ENCODE measurements at regions of chr3 and their contacts with region 1.

Region 1: GRCh38 chr3:101381809-101382208 is 61.4 kb upstream of the IMPG2 start:
- DNase-seq: peak; percentile 77
- H3K4me3 ChIP-seq: no peak overlapping the region
- H3K27ac ChIP-seq: no peak overlapping the region
- H3K4me1 ChIP-seq: no peaks in the 10 kb centered on the region
- H3K27me3 ChIP-seq: no peaks in the 10 kb centered on the region
- CTCF ChIP-seq: peak; percentile 65

Region 2: DNA sequence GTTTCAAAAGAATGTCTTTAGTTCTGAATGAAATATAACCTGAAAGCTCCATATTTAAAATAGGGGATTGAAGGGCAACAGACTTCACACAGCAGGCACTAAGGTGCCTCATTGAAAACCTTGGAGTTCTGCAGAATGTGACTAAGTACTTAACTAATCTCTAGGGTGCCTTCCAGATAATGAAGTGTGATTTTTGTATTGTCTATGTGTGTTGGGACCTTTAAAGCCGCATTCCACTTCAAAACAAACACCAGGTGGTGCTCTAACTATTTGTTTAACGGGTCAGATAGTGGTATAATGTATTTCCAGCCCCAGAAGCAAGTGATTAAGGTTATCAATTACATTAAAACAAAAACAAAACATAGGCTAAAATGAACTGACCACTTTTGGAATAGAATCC is 644.5 kb before region 1 on chr3:
- CTCF ChIA-PET with region 1: no interaction called
- POLR2A ChIA-PET with region 1: no interaction called
- intact Hi-C with region 1: loop called (anchors 5 kb)
- DNase-seq: peak; percentile 57
- H3K4me3 ChIP-seq: no peak overlapping the region
- H3K27ac ChIP-seq: no peak overlapping the region
- H3K4me1 ChIP-seq: no peaks in the 10 kb centered on the region
- H3K27me3 ChIP-seq: no peaks in the 10 kb centered on the region
- CTCF ChIP-seq: peak; percentile 54

Region 3: DNA sequence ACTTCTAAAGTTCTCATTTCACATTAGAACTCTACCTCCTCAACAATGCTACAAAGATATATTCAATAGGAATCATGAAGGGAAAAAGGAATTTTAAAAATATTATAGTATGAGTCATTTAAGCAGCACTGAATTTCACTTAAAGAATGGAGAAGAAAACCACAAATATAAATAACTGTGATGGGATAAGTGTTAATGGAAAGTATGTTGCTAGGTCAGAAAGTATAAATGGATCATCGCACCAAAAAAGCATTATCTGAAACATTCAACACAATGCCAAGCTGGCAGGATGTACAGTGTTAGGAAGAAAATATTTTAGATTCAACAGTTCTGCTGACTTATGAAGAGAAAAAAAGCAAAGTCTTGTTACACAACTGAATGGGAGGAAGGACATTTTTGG is 571.1 kb before region 1 on chr3:
- CTCF ChIA-PET with region 1: no interaction called
- POLR2A ChIA-PET with region 1: no interaction called
- intact Hi-C with region 1: loop called (anchors 10 kb)
- DNase-seq: no peak
- H3K4me3 ChIP-seq: no peak overlapping the region
- H3K27ac ChIP-seq: no peak overlapping the region
- H3K4me1 ChIP-seq: no peaks in the 10 kb centered on the region
- H3K27me3 ChIP-seq: no peaks in the 10 kb centered on the region
- CTCF ChIP-seq: no peak

Region 4: DNA sequence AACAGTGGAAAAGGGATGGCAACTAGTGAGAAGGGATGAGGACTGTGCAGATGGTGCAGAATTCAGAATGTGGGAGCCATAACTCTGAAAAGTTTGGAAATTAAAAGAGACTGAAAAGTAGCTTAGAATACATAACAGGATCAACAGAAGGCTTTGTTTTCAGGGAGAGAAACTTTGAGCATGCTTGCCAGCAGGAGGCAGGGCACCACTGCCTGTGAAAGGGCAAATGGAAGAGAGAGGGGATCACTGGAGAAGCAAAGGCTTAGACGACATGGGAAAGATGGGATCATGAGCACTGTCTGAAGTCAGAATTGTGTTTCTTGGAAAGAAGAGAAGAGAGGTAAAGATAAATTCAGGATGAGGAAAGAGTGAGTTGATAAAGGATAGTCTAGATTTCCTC is 488.2 kb before region 1 on chr3:
- CTCF ChIA-PET with region 1: interaction called, 3 read pairs
- POLR2A ChIA-PET with region 1: no interaction called
- intact Hi-C with region 1: loop called (anchors 5 kb)
- DNase-seq: peak; percentile 66
- H3K4me3 ChIP-seq: no peak overlapping the region
- H3K27ac ChIP-seq: no peak overlapping the region
- H3K4me1 ChIP-seq: no peaks in the 10 kb centered on the region
- H3K27me3 ChIP-seq: no peaks in the 10 kb centered on the region
- CTCF ChIP-seq: peak; percentile 75

Region 5: GRCh38 chr3:101069901-101070798 is 311.7 kb before region 1 on chr3:
- CTCF ChIA-PET with region 1: no interaction called
- POLR2A ChIA-PET with region 1: no interaction called
- intact Hi-C with region 1: loop called (anchors 10 kb)
- DNase-seq: peak; percentile 45
- H3K4me3 ChIP-seq: no peak overlapping the region
- H3K27ac ChIP-seq: no peak overlapping the region
- H3K4me1 ChIP-seq: no peaks in the 10 kb centered on the region
- H3K27me3 ChIP-seq: no peaks in the 10 kb centered on the region
- CTCF ChIP-seq: peak; percentile 78